A673 (cell line): ENCODE measurements at regions of chr13 and their contacts with region 1.

Region 1: DNA sequence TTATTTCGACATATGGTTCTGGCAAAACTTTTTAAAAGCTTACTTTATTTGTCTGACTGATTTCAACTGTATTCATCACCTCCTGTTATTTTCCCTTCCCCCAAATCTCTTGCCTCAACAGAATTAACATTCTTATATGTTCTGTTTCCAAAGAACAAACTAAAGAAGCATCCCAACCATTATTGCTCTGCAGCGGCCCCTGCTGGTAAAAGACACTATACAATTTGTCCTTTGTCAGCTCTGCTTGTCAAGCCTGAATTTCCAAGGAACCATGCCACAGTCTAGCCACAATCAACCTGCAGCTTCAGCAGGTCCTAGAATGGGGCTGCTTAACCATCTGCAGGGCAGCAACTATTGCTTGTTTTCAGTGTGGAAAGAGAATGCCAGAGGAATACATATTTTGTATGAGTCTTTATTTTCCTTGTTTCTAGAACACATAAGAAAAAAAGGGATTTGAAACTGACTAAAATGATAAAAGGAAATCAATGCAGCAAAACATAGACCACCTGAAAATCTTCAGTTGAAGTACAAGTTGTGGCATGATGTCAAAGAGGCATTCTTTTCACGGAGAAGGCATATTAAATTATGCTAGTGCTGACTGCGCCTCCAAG is 845.3 kb downstream of the DIAPH3 start:
- DNase-seq: peak; percentile 93
- H3K4me3 ChIP-seq: no peak overlapping the region
- H3K27ac ChIP-seq: peak overlapping the region; percentile 24
- H3K4me1 ChIP-seq: peaks cover 32% of the 10 kb centered on the region
- H3K27me3 ChIP-seq: no peaks in the 10 kb centered on the region
- CTCF ChIP-seq: peak; percentile 88

Region 2: GRCh38 chr13:59621773-59622172 is 303.3 kb after region 1 on chr13:
- CTCF ChIA-PET with region 1: interaction called, 11 read pairs
- POLR2A ChIA-PET with region 1: no interaction called
- intact Hi-C with region 1: no loop called
- DNase-seq: no peak
- H3K4me3 ChIP-seq: no peak overlapping the region
- H3K27ac ChIP-seq: no peak overlapping the region
- H3K4me1 ChIP-seq: peaks cover 5% of the 10 kb centered on the region
- H3K27me3 ChIP-seq: no peaks in the 10 kb centered on the region
- CTCF ChIP-seq: no peak